Naive thymus-derived CD8-positive, alpha-beta T cell (primary cell): ENCODE measurements at regions of chr3 and their contacts with region 1.

Region 1: DNA sequence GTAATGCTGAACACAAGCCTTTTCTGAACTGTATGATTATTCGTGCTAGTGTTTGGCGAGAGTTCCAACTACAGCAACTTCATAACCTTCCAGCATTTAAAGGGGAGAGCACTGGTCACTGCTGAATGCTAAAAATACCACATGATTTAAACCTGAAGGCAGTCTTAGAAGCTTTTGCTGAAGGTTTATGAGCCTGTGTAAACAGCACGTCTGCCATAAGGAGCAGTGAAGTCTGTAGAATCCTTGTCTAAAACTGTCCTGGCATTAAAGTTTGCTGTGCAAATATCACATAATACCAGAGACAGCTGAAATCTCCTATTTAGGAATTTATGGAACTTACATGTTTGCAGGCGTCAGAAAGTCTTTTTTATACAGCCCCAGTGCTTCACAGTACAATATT is 5.9 kb downstream of the SATB1 start:
- DNase-seq: no peak
- ATAC-seq: no peak
- H3K4me3 Mint-ChIP-seq: peak overlapping the region; percentile 62 to 96 (median 84)
- H3K27ac Mint-ChIP-seq: peak overlapping the region; percentile 91 to 99 (median 95)
- H3K4me1 Mint-ChIP-seq: peaks cover 44 to 88% (median 81%) of the 10 kb centered on the region in 4 donors
- H3K27me3 Mint-ChIP-seq: no peaks in the 10 kb centered on the region

Region 2: GRCh38 chr3:18431266-18431665 is 12.0 kb after region 1 on chr3:
- POLR2A ChIA-PET with region 1: interaction called, 23 read pairs
- DNase-seq: no peak
- ATAC-seq: peak; percentile 6 to 9
- H3K4me3 Mint-ChIP-seq: peak overlapping the region; percentile 64 to 94 (median 86)
- H3K27ac Mint-ChIP-seq: peak overlapping the region; percentile 89 to 98 (median 94)
- H3K4me1 Mint-ChIP-seq: peaks cover 37 to 85% (median 74%) of the 10 kb centered on the region in 4 donors
- H3K27me3 Mint-ChIP-seq: no peaks in the 10 kb centered on the region

Region 3: GRCh38 chr3:18438586-18438985 is 19.4 kb after region 1 on chr3:
- POLR2A ChIA-PET with region 1: interaction called, 65 read pairs
- DNase-seq: peak; percentile 48 to 90 (median 80)
- ATAC-seq: peak; percentile 87 to 94
- H3K4me3 Mint-ChIP-seq: peak overlapping the region; percentile 80 to 90 (median 86)
- H3K27ac Mint-ChIP-seq: peak overlapping the region; percentile 91 to 97 (median 96)
- H3K4me1 Mint-ChIP-seq: peaks cover 21 to 78% (median 46%) of the 10 kb centered on the region in 4 donors
- H3K27me3 Mint-ChIP-seq: no peaks in the 10 kb centered on the region

Region 4: GRCh38 chr3:18872466-18872865 is 453.2 kb after region 1 on chr3:
- POLR2A ChIA-PET with region 1: no interaction called
- DNase-seq: no peak
- ATAC-seq: no peak
- H3K4me3 Mint-ChIP-seq: no peak overlapping the region
- H3K27ac Mint-ChIP-seq: no peak overlapping the region
- H3K4me1 Mint-ChIP-seq: peaks cover 0 to 3% (median under 1%) of the 10 kb centered on the region in 4 donors
- H3K27me3 Mint-ChIP-seq: no peaks in the 10 kb centered on the region